ENCODE measurements at regions of chr11 and their contacts with region 1.

Region 1: GRCh38 chr11:14907411-14908213 is 15.6 kb upstream of the CYP2R1 start:
- DNase-seq: peak; percentile 94
- ATAC-seq: peak; percentile 75
- H3K4me3 Mint-ChIP-seq: no peak overlapping the region
- H3K27ac Mint-ChIP-seq: no peak overlapping the region
- H3K4me1 Mint-ChIP-seq: peaks cover 41% of the 10 kb centered on the region
- H3K27me3 Mint-ChIP-seq: no peaks in the 10 kb centered on the region

Region 2: DNA sequence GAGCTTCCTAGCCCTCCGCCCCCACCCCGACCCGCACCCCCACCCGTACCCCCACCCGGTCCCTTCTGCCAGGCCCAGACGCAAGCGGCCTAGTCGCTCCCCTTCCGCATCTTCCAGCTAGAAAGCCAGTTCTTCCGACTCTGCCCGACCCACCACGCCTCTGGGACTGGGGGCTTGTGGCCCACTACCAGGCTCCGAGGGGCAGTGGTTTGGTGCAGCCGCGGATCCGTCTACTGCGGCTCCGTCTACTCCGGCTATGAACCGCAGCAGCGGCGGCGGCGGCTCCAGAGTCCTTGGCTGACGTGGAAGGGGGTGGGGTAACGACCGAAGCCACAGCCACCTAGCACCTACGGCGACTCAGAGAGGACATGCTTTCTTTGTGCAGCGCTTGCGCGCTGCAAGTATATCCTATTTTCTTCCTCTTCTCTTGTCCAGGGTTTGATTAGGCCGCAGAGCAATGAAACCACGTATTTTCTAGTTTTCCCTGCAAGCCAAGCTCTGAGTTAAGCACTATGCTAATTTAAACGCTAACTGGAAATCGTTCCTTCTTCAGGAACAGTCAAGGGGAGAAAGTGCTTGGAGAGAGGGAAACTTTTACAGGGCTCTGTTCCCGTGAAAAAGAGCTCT is 407.9 kb before region 1 on chr11 and contains the start of gene COPB1:
- CTCF ChIA-PET with region 1: interaction called, 6 read pairs
- POLR2A ChIA-PET with region 1: interaction called, 3 read pairs
- intact Hi-C with region 1: loop called in 1 of 2 experiments (anchors 1 kb)
- DNase-seq: peak; percentile 96
- ATAC-seq: peak; percentile 92
- H3K4me3 Mint-ChIP-seq: peak within 1 kb of the TSS; percentile 87
- H3K27ac Mint-ChIP-seq: peak within 1 kb of the TSS; percentile 95
- H3K4me1 Mint-ChIP-seq: peaks cover 35% of the 10 kb centered on the region
- H3K27me3 Mint-ChIP-seq: no peaks in the 10 kb centered on the region
- total RNA-seq, gene COPB1: 102 to 106 TPM

Region 3: GRCh38 chr11:14623036-14623435 is 284.6 kb before region 1 on chr11:
- CTCF ChIA-PET with region 1: interaction called, 14 read pairs
- POLR2A ChIA-PET with region 1: no interaction called
- intact Hi-C with region 1: no loop called
- DNase-seq: no peak
- ATAC-seq: no peak
- H3K4me3 Mint-ChIP-seq: no peak overlapping the region
- H3K27ac Mint-ChIP-seq: peak overlapping the region; percentile 27
- H3K4me1 Mint-ChIP-seq: peaks cover 48% of the 10 kb centered on the region
- H3K27me3 Mint-ChIP-seq: no peaks in the 10 kb centered on the region

Region 4: GRCh38 chr11:14789879-14790484 is 117.6 kb before region 1 on chr11:
- CTCF ChIA-PET with region 1: interaction called, 194 read pairs
- POLR2A ChIA-PET with region 1: interaction called, 4 read pairs
- intact Hi-C with region 1: loop called (anchors 1 kb)
- DNase-seq: no peak
- ATAC-seq: no peak
- H3K4me3 Mint-ChIP-seq: no peak overlapping the region
- H3K27ac Mint-ChIP-seq: no peak overlapping the region
- H3K4me1 Mint-ChIP-seq: peaks cover 7% of the 10 kb centered on the region
- H3K27me3 Mint-ChIP-seq: no peaks in the 10 kb centered on the region

Region 5: DNA sequence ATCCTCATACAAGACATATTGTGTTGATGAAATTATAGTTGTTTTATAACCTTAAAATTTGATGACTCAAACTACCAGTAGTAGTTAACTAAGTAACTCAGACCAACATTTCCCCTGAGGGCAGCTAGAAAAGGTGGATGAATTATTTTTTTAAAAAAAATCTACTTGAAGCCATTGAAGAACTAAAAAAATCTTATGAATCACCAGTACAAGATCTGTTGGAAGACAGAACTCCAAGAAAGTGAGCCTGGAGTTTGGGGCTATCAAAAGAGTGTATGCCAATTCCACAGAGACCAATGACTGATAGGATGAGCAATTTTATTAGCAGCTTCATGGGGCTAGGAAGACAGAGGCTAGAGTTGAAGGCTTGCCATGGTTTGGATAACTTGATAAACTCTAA is 88.0 kb before region 1 on chr11:
- CTCF ChIA-PET with region 1: no interaction called
- POLR2A ChIA-PET with region 1: no interaction called
- intact Hi-C with region 1: no loop called
- DNase-seq: no peak
- ATAC-seq: no peak
- H3K4me3 Mint-ChIP-seq: no peak overlapping the region
- H3K27ac Mint-ChIP-seq: no peak overlapping the region
- H3K4me1 Mint-ChIP-seq: peaks cover 4% of the 10 kb centered on the region
- H3K27me3 Mint-ChIP-seq: no peaks in the 10 kb centered on the region

Region 6: GRCh38 chr11:14942745-14943144 is 35.1 kb after region 1 on chr11:
- CTCF ChIA-PET with region 1: interaction called, 20 read pairs
- POLR2A ChIA-PET with region 1: no interaction called
- intact Hi-C with region 1: no loop called
- DNase-seq: no peak
- ATAC-seq: no peak
- H3K4me3 Mint-ChIP-seq: no peak overlapping the region
- H3K27ac Mint-ChIP-seq: no peak overlapping the region
- H3K4me1 Mint-ChIP-seq: no peaks in the 10 kb centered on the region
- H3K27me3 Mint-ChIP-seq: no peaks in the 10 kb centered on the region

Region 7: DNA sequence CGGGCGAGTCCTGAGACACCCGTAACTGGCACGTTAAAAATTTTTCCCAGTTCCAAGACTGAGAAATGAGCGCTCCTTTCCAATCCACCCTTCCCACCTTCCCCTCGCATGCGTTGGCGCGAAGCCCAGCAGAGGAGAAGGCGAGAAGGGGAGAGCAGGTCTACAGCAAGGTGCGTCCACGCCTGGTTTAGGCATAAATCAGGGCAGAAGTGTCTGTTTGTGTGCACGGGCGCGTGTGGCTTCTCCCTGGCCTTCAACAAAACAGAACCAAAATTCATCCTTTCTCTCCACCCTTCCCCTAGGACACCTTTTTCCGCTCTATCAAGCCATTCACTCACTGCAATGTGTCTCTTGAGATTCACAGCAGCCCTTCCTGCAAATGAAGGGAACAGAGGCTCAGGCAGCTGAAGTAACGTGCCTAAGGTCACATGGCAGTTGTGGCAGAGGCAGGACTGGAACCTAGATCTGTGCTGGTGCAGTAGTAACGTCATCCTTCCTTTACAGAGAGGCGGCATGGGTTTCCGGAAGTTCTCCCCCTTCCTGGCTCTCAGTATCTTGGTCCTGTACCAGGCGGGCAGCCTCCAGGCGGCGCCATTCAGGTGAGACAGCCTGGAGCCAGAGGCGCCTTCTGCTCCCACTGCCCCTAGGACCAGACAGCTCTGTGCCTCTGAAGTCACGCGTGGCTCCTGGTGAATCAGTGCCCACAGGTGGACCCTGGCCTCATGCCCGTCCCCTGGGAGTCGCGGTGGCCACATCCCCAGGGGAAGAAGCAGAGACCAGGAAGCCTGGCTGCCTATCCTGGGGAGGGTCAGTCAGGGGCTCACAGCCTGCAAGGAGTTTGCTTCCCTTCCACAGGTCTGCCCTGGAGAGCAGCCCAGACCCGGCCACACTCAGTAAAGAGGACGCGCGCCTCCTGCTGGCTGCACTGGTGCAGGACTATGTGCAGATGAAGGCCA is 166.9 kb after region 1 on chr11:
- CTCF ChIA-PET with region 1: interaction called, 159 read pairs
- POLR2A ChIA-PET with region 1: interaction called, 3 read pairs
- intact Hi-C with region 1: loop called (anchors 1 kb)
- DNase-seq: peak; percentile 95
- ATAC-seq: peak; percentile 88
- H3K4me3 Mint-ChIP-seq: peak overlapping the region; percentile 80
- H3K27ac Mint-ChIP-seq: peak overlapping the region; percentile 87
- H3K4me1 Mint-ChIP-seq: peaks cover 18% of the 10 kb centered on the region
- H3K27me3 Mint-ChIP-seq: peaks cover 11% of the 10 kb centered on the region

Measured in activated CD4-positive, alpha-beta T cell treated with anti-CD3 and anti-CD28 coated beads for 36 hours (primary cell).